PC-9 (cell line): ENCODE measurements at regions of chr10 and their contacts with region 1.

Region 1: DNA sequence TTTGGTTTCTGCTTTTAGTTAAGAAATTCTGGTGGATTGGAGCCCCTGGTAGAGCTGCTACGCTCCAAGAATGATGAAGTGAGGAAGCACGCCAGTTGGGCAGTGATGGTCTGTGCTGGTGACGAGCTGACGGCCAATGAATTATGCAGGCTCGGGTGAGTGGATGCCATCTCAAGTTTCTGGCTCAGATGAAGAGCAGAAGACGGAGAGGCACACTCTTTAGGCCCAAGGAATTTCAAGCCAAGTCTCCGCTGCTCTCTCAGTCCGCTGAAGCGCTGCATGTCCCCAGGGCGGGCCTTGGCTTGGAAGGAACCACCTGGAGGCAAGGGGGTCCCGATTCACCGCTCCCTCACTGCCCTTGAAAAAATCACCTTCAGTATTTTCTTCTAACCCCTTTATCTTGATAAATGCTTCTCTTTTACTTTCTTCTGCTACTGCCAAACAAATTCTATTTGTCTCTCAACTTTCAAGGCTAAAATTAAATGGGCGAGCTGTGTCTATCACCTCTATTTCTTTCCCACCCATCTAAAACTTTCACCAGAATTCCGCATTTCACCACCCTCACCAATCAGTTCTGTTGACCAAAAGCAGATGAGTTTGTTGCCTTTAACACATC is 74.2 kb downstream of the ARMC3 start:
- DNase-seq: no peak
- H3K4me3 ChIP-seq: no peak overlapping the region
- H3K27ac ChIP-seq: no peak overlapping the region
- H3K4me1 ChIP-seq: no peaks in the 10 kb centered on the region
- H3K27me3 ChIP-seq: no peaks in the 10 kb centered on the region
- CTCF ChIP-seq: no peak

Region 2: GRCh38 chr10:21978191-21978862 is 1023.7 kb before region 1 on chr10:
- CTCF ChIA-PET with region 1: no interaction called
- POLR2A ChIA-PET with region 1: interaction called, 10 read pairs
- intact Hi-C with region 1: no loop called
- DNase-seq: no peak
- H3K4me3 ChIP-seq: no peak overlapping the region
- H3K27ac ChIP-seq: no peak overlapping the region
- H3K4me1 ChIP-seq: 0 out of 2 replicates have a peak, but pooled peaks cover 4% of the 10 kb centered on the region
- H3K27me3 ChIP-seq: no peaks in the 10 kb centered on the region
- CTCF ChIP-seq: no peak

Region 3: DNA sequence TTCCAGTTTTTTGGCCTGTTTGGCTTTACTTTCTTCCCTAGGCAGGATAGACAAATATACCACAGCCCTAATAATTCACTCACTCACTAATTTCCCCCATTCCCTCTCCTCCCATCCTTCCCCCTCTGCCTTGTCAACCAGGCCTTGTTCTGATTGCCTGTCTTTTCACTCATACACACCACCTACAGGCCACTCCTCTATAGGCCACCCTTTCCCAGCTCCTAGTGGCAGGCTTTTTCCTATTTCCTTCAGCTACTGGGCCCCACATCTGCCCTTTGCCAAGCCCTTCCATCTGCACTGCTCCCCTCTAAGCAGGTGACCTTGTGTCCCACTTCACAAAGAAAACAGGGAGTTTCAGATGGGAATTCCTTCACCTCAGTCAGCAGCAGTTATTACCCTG is 33.6 kb after region 1 on chr10:
- CTCF ChIA-PET with region 1: no interaction called
- POLR2A ChIA-PET with region 1: no interaction called
- intact Hi-C with region 1: loop called (anchors 5 kb)
- DNase-seq: no peak
- H3K4me3 ChIP-seq: no peak overlapping the region
- H3K27ac ChIP-seq: no peak overlapping the region
- H3K4me1 ChIP-seq: no peaks in the 10 kb centered on the region
- H3K27me3 ChIP-seq: no peaks in the 10 kb centered on the region
- CTCF ChIP-seq: peak; percentile 32; the same call in 1 of the 2 replicates